Right ventricle myocardium superior (tissue), 1 donor: ENCODE measurements at regions of chr2 and their contacts with region 1.

Region 1: DNA sequence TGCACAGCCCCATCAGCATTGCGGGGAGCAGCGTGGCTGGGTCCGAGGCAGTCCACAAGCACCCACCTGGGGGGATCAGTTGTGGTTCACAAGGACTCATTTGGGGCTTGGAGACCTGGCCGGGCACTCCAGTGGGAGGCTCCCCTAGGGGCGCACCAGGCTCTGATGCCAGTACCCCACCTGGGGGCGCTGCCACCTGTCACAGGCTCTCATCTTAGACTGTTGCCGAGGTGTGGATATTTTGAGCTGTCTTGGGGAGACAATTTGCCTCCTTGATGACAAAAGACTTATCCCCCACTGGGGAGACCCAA is 3.0 kb downstream of the ADRA2B start:
- DNase-seq: peak; percentile 11
- ATAC-seq: no peak

Region 2: DNA sequence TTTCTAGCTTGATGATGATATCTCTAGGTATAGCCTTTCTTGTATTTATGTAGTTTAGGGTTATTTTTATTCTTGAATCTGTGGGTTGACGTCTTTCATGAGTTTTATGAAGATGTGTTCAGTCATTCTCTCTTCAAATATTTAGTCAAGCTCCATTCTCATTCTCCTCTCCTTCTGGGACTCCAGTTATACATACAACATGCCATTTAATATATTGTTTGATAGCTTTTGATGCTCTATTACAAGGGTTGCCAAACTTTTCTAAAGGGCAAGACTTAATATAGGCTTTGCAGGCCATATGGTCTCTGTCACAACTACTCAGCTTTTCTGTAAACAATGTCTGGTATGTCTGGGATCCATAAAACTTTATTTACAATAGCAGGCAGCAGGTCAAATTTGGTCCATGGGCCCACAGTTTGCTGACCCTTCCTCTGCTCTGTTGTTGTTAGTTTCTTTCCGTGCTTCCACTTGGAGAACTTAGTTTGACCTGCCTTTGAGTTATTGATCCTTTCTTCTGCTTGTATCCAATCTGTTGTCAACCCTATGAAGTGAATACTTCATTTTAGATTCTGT is 38.0 kb before region 1 on chr2:
- intact Hi-C with region 1: loop called (anchors 5 kb)
- DNase-seq: no peak
- ATAC-seq: no peak

Region 3: GRCh38 chr2:96470636-96471035 is 357.3 kb after region 1 on chr2:
- intact Hi-C with region 1: no loop called
- DNase-seq: peak; percentile 69
- ATAC-seq: peak; percentile 86

Region 4: DNA sequence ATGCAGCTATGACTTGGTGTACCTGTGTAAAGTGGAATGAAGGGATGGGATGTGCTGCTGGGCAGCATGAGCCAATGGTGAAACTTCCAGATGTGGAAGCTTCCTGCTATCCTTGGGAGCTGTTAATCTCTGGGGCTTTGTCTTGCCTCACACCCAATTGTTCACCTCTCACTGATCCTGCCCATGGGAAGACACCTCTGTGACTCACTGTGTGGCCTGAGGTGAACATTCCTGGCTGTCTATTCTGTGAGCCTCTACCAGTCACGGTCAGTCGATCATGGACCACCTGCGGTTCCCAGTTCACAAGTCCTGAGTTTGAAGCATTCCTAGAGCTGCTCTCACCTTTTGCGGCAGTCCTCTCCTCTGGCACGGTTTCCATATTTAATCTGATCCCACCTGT is 379.8 kb after region 1 on chr2:
- intact Hi-C with region 1: no loop called
- DNase-seq: no peak
- ATAC-seq: no peak